ENCODE measurements at regions of chr2 and their contacts with region 1.

Region 1: GRCh38 chr2:160970052-160970965 is 189.9 kb upstream of the TANK start:
- DNase-seq: peak in 6 of 7 donors; percentile 15 to 62 (median 38)
- H3K4me3 ChIP-seq: peak overlapping the region in 1 of 4 donors; percentile 4
- H3K27ac ChIP-seq: peak overlapping the region in 1 of 5 donors; percentile 24
- H3K4me1 ChIP-seq: peaks cover 0 to 7% of the 10 kb centered on the region in 2 donors
- H3K27me3 ChIP-seq: no peaks in the 10 kb centered on the region
- CTCF ChIP-seq: peak; percentile 36 to 77 (median 66)
- POLR2A ChIP-seq: no peak

Region 2: DNA sequence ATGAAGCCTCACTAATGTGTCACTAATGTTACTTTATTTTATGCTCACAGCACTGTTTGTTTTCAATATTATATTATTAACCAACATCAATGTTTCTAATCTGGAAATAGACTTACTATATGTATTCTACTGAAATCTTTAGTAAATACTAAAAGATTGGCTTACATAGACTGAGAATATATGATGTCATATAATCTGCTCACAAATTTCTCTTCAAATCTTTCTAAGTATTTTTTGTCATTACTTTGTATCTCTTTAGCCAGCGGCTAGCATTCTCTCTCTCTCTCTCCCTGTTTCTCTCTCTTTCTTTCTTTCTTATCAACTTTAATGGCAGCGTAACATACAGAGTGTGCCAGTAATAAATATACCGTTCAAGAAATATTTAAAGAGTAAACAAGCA is 823.9 kb before region 1 on chr2:
- intact Hi-C with region 1: no loop called
- DNase-seq: no peak
- H3K4me3 ChIP-seq: no peak overlapping the region
- H3K27ac ChIP-seq: no peak overlapping the region
- H3K4me1 ChIP-seq: no peaks in the 10 kb centered on the region
- H3K27me3 ChIP-seq: no peaks in the 10 kb centered on the region
- CTCF ChIP-seq: no peak
- POLR2A ChIP-seq: no peak

Region 3: DNA sequence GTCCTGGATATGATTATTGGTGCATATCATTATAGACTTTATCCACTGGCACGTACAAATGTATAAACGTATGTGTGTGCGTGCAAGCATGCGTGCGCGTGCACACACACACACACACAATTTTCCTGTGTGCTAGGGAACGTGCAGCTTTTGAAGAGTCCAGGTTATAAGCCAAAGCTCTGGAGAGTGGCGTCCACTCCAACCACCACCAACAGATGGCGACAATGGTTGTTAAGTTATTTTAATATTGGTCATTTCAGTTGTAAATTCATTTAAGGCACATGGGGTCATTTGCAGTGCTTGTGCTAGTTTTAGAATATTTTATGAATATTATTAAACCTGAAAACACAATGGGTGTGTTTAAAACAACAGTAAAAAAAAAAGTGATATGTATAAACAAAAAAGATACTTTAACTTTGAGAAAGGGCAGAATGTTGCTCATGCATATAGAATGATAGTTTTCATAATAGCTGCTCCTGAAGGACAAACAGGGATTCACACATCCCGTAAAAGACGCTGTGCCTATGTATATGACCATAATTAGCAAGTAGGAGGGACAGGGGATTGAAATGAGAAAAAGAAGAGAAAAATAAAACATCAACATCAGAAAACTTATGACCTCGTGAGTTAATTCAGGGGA is 646.0 kb before region 1 on chr2:
- intact Hi-C with region 1: loop called in 1 of 2 experiments (anchors 10 kb)
- DNase-seq: peak; percentile 47 to 88 (median 64)
- H3K4me3 ChIP-seq: no peak overlapping the region
- H3K27ac ChIP-seq: no peak overlapping the region
- H3K4me1 ChIP-seq: peaks cover 0 to 47% of the 10 kb centered on the region in 2 donors
- H3K27me3 ChIP-seq: no peaks in the 10 kb centered on the region
- CTCF ChIP-seq: peak; percentile 35 to 73 (median 68)
- POLR2A ChIP-seq: no peak

Region 4: DNA sequence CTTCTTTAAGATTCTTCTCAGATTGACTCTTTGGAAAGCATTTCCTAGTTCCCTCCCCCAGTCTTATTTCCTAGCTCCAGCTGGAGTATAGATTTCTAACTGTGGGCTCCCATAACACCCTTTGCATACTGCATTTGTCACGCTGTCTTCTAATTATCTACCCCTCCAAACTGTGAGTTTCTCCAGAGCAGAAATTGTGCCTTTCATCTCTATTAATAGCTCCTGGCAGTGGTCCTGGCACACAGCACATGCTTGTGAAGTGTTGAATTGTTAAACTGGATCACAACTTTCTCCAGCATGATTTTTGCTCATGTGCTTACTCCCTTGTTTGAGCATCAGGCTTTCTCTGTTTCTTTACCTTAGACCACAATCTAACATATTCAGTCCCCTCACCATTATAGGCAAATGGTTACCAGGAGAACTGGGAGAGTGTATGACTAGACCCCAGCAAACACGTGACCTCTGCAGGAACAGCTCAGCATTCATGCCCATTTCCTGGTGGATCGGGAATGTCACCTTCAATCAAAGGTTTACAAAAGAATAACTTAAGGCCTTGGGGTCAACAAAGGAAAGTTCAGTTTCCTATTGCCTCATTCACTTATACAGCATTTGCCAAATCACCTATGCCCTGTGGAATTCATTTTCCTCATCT is 14.2 kb after region 1 on chr2:
- intact Hi-C with region 1: no loop called
- DNase-seq: no peak
- H3K4me3 ChIP-seq: no peak overlapping the region
- H3K27ac ChIP-seq: no peak overlapping the region
- H3K4me1 ChIP-seq: no peaks in the 10 kb centered on the region
- H3K27me3 ChIP-seq: no peaks in the 10 kb centered on the region
- CTCF ChIP-seq: no peak
- POLR2A ChIP-seq: no peak

Measured in adrenal gland (tissue), 19 donors.